A549 (cell line): ENCODE measurements at regions of chr1 and their contacts with region 1.

Region 1: DNA sequence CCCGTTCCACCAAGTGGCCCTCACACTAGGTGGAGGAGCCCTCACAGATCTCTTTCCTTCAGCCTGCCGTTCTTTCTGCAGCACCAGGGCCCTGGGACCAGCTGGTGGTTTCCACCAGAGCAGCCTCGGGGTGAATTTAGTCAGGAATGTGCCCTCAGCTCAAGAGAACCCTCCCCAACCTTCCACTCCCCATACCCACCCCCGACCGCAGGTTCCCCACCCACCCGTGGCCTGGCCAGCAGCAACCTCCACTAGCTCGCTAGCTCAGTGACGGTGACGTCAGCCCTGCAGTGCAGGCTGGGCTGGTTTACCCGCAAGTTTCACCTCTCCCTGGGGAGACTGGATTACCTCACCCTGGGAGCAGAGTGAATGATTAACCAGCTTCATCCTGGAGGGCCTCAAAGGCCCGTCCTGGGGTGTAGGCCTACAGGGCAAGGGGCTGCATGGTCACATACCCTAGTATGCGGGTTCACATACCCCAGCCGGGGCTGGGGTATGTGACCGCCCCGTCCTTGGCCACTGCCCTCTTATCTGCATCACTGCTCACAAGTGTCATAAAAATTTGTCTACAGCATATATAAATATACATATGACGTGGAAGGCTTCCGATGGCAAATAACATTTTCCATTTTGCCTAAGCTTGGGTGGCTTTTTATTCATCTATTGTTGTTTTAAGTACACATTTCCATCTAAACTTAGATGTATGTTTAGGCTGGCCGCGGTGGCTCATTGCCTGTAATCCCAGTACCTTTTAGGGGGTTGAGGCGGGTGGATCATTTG is 24.5 kb downstream of the ELF3 start:
- DNase-seq: peak; percentile 91 to 100
- ATAC-seq: peak; percentile 92 to 95
- H3K4me3 ChIP-seq: peak overlapping the region; percentile 17; the same call in 1 of the 3 replicates
- H3K27ac ChIP-seq: peak overlapping the region; percentile 97 to 99
- H3K4me1 ChIP-seq: peaks cover 52% of the 10 kb centered on the region
- CTCF ChIP-seq: no peak
- EP300 ChIP-seq: peak; percentile 96 to 98
- POLR2A ChIP-seq: no peak; the same call in 1 of the 2 replicates
- RAD21 ChIP-seq: peak; percentile 21 to 67; a peak in 3 of 5 replicates

Region 2: DNA sequence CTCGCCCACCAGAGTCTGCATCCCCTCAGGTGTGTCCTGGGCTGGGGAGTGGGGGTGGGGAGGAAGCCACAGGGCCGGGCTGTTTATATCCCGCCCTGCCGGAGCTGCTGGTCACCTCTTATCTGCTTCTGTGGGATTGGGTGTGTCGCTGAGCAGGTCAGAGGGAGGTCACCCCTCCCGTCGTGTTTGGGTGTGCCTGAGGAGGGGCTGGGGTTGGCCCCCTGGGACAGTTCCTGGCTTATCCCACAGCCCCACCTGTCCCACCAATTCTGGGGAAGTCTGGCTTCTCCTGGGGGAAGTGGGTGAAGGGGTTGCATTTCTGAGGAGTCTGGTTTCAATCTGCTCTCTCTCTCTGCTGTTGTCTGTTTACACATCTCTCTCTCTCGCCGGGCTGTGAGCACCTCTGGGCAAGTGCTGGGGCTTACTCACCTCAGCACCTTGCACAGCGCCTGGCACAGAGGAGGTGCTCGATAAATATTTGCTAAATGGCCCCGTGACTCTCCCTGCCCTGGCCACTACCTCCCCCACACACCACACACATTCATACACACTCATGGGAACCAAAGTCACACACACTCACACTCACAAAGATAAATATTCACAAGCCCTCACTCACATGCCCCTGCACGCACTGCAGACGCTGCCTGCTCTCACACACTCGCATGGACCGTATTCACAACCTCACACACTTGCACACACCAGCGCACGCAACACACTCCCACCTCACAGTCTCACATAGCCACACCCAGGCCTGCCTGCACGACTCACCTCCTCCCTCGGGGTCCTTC is 16.2 kb before region 1 on chr1:
- CTCF ChIA-PET with region 1: interaction called, 10 read pairs
- POLR2A ChIA-PET with region 1: interaction called, 68 read pairs
- DNase-seq: peak; percentile 81 to 99
- ATAC-seq: peak; percentile 71
- H3K4me3 ChIP-seq: peak overlapping the region; percentile 23; the same call in 2 of the 3 replicates
- H3K27ac ChIP-seq: peak overlapping the region; percentile 93 to 94
- H3K4me1 ChIP-seq: peaks cover 91% of the 10 kb centered on the region
- CTCF ChIP-seq: no peak
- EP300 ChIP-seq: peak; percentile 89 to 90; a peak in 3 of 5 replicates
- POLR2A ChIP-seq: no peak
- RAD21 ChIP-seq: peak; percentile 26 to 68; a peak in 4 of 5 replicates

Region 3: GRCh38 chr1:202046227-202046801 is 11.4 kb after region 1 on chr1:
- CTCF ChIA-PET with region 1: interaction called, 6 read pairs
- POLR2A ChIA-PET with region 1: interaction called, 11 read pairs
- DNase-seq: no peak
- ATAC-seq: peak; percentile 3 to 4; a peak in 3 of 6 replicates
- H3K4me3 ChIP-seq: no peak overlapping the region
- H3K27ac ChIP-seq: peak overlapping the region; percentile 85 to 97
- H3K4me1 ChIP-seq: peaks cover 83% of the 10 kb centered on the region
- CTCF ChIP-seq: no peak
- EP300 ChIP-seq: no peak
- POLR2A ChIP-seq: no peak
- RAD21 ChIP-seq: no peak

Region 4: DNA sequence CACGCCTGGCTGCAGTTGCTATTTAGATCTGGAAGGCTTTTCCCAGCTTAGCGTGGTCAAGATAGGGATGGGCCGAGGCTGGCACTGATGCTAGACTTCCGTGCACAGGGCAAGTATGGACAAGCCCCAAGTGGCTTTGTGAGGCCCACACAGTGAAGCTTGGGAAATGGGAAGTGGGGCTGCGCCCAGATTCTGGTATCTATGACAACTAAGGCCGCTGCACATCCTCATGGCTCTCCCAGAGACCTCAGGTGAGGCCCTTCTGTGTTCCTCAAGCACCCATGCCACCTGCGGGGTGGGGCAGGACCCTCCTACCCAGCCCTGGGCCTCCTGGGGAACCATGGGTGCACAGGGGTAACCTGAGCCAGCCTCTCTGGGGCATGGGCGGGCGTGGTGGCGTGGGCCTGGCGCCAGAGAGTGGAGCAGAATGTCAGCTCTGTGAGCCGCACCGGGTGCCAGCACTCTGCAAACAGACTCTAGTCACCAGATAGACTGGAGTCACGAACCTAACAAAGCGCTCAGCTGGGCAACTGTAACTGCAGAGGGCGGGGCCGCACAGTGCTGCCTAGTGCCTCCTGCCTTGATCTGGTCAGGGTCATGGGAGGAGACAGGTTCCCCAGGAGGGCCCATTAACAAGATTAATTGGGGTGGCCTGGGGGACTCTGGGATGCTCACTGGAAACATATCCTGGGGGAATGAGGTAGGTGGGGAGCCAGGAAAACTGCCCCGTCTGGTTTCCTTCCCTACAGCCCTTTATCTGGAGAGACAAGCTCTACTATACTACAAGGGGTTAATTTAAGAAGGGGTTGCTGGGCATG is 22.0 kb after region 1 on chr1:
- CTCF ChIA-PET with region 1: interaction called, 4 read pairs
- POLR2A ChIA-PET with region 1: interaction called, 24 read pairs
- DNase-seq: peak; percentile 94 to 98
- ATAC-seq: peak; percentile 87 to 91
- H3K4me3 ChIP-seq: no peak overlapping the region
- H3K27ac ChIP-seq: peak overlapping the region; percentile 97 to 98
- H3K4me1 ChIP-seq: peaks cover 58% of the 10 kb centered on the region
- CTCF ChIP-seq: no peak
- EP300 ChIP-seq: peak; percentile 69 to 89; a peak in 4 of 5 replicates
- POLR2A ChIP-seq: no peak
- RAD21 ChIP-seq: peak in 1 of 2 experiments; percentile 29; a peak in 2 of 5 replicates

Region 5: DNA sequence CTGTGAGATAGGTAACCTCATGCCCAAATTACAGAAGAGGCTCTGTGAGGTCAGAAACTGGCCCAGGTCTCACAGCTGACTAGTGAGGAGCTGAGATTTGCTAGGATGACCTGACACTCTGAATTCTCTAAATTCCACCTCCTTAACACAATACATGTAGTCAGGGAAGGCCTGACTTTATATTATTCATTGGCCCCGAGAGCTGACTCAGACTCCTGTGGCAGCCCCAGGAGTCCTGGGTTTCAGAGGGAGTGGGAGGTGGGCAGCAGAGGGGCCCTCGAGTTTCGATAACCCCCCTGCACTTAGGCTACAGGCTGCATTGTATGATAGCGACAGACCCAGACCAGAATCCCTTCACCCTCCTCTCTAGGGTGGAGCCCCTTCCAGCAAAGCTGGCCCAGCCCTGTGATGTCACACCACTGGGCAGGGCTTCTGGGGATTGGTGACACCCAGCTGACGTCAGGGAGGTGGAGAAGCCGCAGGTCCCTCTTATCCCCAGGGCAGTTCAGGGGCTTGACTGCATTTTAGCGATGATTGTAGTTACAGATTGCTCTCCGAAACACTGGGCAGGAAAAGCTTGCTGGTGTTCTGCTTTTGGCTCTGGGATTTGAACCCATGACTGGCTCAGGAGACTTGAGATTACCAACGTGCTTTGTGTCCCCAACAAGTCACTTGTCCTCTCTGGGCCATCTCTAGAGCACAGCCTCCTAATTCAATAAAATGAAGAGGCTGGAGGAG is 70.8 kb after region 1 on chr1:
- CTCF ChIA-PET with region 1: interaction called, 5 read pairs
- POLR2A ChIA-PET with region 1: interaction called, 12 read pairs
- DNase-seq: peak; percentile 91 to 93
- ATAC-seq: peak; percentile 85 to 89
- H3K4me3 ChIP-seq: no peak overlapping the region
- H3K27ac ChIP-seq: peak overlapping the region; percentile 91 to 94
- H3K4me1 ChIP-seq: peaks cover 66% of the 10 kb centered on the region
- CTCF ChIP-seq: no peak
- EP300 ChIP-seq: no peak
- POLR2A ChIP-seq: no peak
- RAD21 ChIP-seq: 0 out of 5 replicates have a peak, but pooled peaks of 1 of the 2 experiments have one; percentile 11

Region 6: GRCh38 chr1:202112839-202113672 is 78.2 kb after region 1 on chr1:
- CTCF ChIA-PET with region 1: interaction called, 13 read pairs
- POLR2A ChIA-PET with region 1: interaction called, 9 read pairs
- DNase-seq: peak; percentile 62 to 85
- ATAC-seq: peak; percentile 76 to 80
- H3K4me3 ChIP-seq: no peak overlapping the region
- H3K27ac ChIP-seq: peak overlapping the region; percentile 88 to 94
- H3K4me1 ChIP-seq: peaks cover 73% of the 10 kb centered on the region
- CTCF ChIP-seq: no peak
- EP300 ChIP-seq: no peak; a peak in 1 of 5 replicates
- POLR2A ChIP-seq: no peak
- RAD21 ChIP-seq: peak; percentile 24 to 25; a peak in 3 of 5 replicates